ENCODE measurements at regions of chr11 and their contacts with region 1.

Region 1: GRCh38 chr11:130827451-130828377 is 88.6 kb downstream of the SNX19 start:
- DNase-seq: peak; percentile 80
- ATAC-seq: peak; percentile 90

Region 2: GRCh38 chr11:130671801-130672700 is 155.7 kb before region 1 on chr11:
- intact Hi-C with region 1: loop called (anchors 10 kb)
- DNase-seq: peak; percentile 81
- ATAC-seq: peak; percentile 72